ENCODE measurements at regions of chr11 and their contacts with region 1.

Region 1: GRCh38 chr11:117178210-117179034 is at the start of gene SIDT2:
- DNase-seq: peak; percentile 77 to 94 (median 86)
- ATAC-seq: peak; percentile 89
- H3K4me3 ChIP-seq: peak within 1 kb of the TSS; percentile 81
- H3K4me3 Mint-ChIP-seq: peak within 1 kb of the TSS; percentile 99
- H3K27ac ChIP-seq: peak within 1 kb of the TSS; percentile 34 to 52
- H3K27ac Mint-ChIP-seq: peak within 1 kb of the TSS; percentile 98
- H3K4me1 ChIP-seq: peaks cover 32% of the 10 kb centered on the region
- H3K4me1 Mint-ChIP-seq: peaks cover 40% of the 10 kb centered on the region
- H3K27me3 ChIP-seq: no peaks in the 10 kb centered on the region
- H3K27me3 Mint-ChIP-seq: no peaks in the 10 kb centered on the region
- CTCF ChIP-seq: no peak
- total RNA-seq, gene SIDT2: 197 to 200 TPM

Region 2: GRCh38 chr11:116853461-116854073 is 324.9 kb before region 1 on chr11:
- CTCF ChIA-PET with region 1: no interaction called
- POLR2A ChIA-PET with region 1: interaction called, 16 read pairs
- intact Hi-C with region 1: no loop called
- DNase-seq: peak in 12 of 14 experiments; percentile 15 to 93 (median 52)
- ATAC-seq: peak; percentile 95
- H3K4me3 ChIP-seq: peak overlapping the region; percentile 13
- H3K4me3 Mint-ChIP-seq: peak overlapping the region; percentile 18
- H3K27ac ChIP-seq: peak overlapping the region; percentile 69 to 82
- H3K27ac Mint-ChIP-seq: peak overlapping the region; percentile 82
- H3K4me1 ChIP-seq: peaks cover 68% of the 10 kb centered on the region
- H3K4me1 Mint-ChIP-seq: peaks cover 74% of the 10 kb centered on the region
- H3K27me3 ChIP-seq: no peaks in the 10 kb centered on the region
- H3K27me3 Mint-ChIP-seq: no peaks in the 10 kb centered on the region
- CTCF ChIP-seq: no peak

Region 3: GRCh38 chr11:117197516-117198456 is 19.4 kb after region 1 on chr11:
- CTCF ChIA-PET with region 1: interaction called, 3 read pairs
- POLR2A ChIA-PET with region 1: interaction called, 18 read pairs
- intact Hi-C with region 1: no loop called
- DNase-seq: no peak
- ATAC-seq: no peak
- H3K4me3 ChIP-seq: no peak overlapping the region
- H3K4me3 Mint-ChIP-seq: no peak overlapping the region
- H3K27ac ChIP-seq: no peak overlapping the region
- H3K27ac Mint-ChIP-seq: peak overlapping the region; percentile 26
- H3K4me1 ChIP-seq: no peaks in the 10 kb centered on the region
- H3K4me1 Mint-ChIP-seq: peaks cover 10% of the 10 kb centered on the region
- H3K27me3 ChIP-seq: no peaks in the 10 kb centered on the region
- H3K27me3 Mint-ChIP-seq: no peaks in the 10 kb centered on the region
- CTCF ChIP-seq: no peak

Measured in CD4-positive, alpha-beta T cell (primary cell).